ENCODE measurements at regions of chr3 and their contacts with region 1.

Region 1: GRCh38 chr3:98726084-98726483 is 37.1 kb upstream of the ST3GAL6 start:
- DNase-seq: peak; percentile 34
- ATAC-seq: no peak
- H3K4me3 ChIP-seq: no peak overlapping the region
- H3K27ac ChIP-seq: no peak overlapping the region
- H3K4me1 ChIP-seq: peaks cover 16% of the 10 kb centered on the region
- H3K27me3 ChIP-seq: no peaks in the 10 kb centered on the region
- CTCF ChIP-seq: no peak

Region 2: GRCh38 chr3:98259707-98260106 is 466.4 kb before region 1 on chr3:
- CTCF ChIA-PET with region 1: no interaction called
- POLR2A ChIA-PET with region 1: no interaction called
- intact Hi-C with region 1: no loop called
- DNase-seq: peak; percentile 44
- ATAC-seq: peak; percentile 37; the same call in 1 of the 2 replicates
- H3K4me3 ChIP-seq: no peak overlapping the region
- H3K27ac ChIP-seq: no peak overlapping the region
- H3K4me1 ChIP-seq: no peaks in the 10 kb centered on the region
- H3K27me3 ChIP-seq: peaks cover 8% of the 10 kb centered on the region; the same call in 1 of the 2 replicates
- CTCF ChIP-seq: peak; percentile 52

Region 3: GRCh38 chr3:98778852-98779413 is 52.8 kb after region 1 on chr3:
- CTCF ChIA-PET with region 1: no interaction called
- POLR2A ChIA-PET with region 1: no interaction called
- intact Hi-C with region 1: no loop called
- DNase-seq: no peak
- ATAC-seq: no peak
- H3K4me3 ChIP-seq: no peak overlapping the region
- H3K27ac ChIP-seq: no peak overlapping the region
- H3K4me1 ChIP-seq: peaks cover 4% of the 10 kb centered on the region; the same call in 1 of the 2 replicates
- H3K27me3 ChIP-seq: no peaks in the 10 kb centered on the region
- CTCF ChIP-seq: no peak

Region 4: GRCh38 chr3:98994128-98994762 is 268.2 kb after region 1 on chr3:
- CTCF ChIA-PET with region 1: interaction called, 10 read pairs
- POLR2A ChIA-PET with region 1: no interaction called
- intact Hi-C with region 1: loop called (anchors 5 kb)
- DNase-seq: peak; percentile 84
- ATAC-seq: peak; percentile 70
- H3K4me3 ChIP-seq: no peak overlapping the region
- H3K27ac ChIP-seq: peak overlapping the region; percentile 7; the same call in 1 of the 2 replicates
- H3K4me1 ChIP-seq: peaks cover 7% of the 10 kb centered on the region; the same call in 1 of the 2 replicates
- H3K27me3 ChIP-seq: no peaks in the 10 kb centered on the region
- CTCF ChIP-seq: peak; percentile 93

Measured in PC-3 (cell line).